ENCODE measurements at regions of chr7 and their contacts with region 1.

Region 1: DNA sequence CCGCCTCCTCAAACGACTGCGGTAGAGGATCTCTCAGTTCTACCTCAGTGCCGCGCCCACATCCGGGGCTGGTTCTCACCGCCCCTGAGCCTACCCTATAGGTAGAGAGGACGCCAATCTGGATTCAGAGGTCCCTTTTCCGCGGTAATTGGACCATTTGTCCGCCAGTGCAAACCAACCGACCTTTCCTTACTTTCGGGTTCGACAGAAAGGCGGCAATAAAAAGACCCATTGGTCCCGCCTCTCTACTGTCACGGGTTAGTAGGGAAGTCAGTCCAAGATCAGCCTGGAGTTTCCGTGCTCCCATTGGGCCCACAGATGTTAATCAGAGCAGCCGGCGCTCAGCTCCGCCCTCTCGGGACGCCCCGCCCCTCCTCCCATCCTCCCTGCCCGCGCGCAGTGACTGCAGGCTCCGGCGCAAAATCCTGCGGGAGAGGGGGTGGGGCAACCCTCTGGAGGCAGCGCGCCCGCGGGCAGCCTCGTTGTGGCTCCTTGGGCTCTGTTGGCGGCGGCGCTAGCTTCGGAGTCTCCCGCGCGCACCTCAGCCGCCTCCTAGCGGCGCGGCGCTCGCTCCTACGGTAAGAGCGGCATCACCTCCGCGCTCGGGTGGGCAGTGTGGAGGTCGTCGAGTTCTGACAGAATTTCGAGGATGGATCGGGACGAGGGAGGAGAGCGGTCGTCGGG is at the starts of genes PHTF2 and TMEM60:
- DNase-seq: peak; percentile 96
- H3K4me3 Mint-ChIP-seq: peak within 1 kb of the TSS; percentile 87
- H3K27ac Mint-ChIP-seq: peak within 1 kb of the TSS; percentile 88
- H3K4me1 Mint-ChIP-seq: peaks cover 66% of the 10 kb centered on the region
- H3K27me3 Mint-ChIP-seq: no peaks in the 10 kb centered on the region
- total RNA-seq, gene PHTF2: 24.5 to 25.3 TPM
- total RNA-seq, gene TMEM60: 11.1 to 11.4 TPM

Region 2: GRCh38 chr7:77331938-77332695 is 466.4 kb before region 1 on chr7:
- CTCF ChIA-PET with region 1: no interaction called
- intact Hi-C with region 1: loop called (anchors 2 kb)
- DNase-seq: peak; percentile 74
- H3K4me3 Mint-ChIP-seq: no peak overlapping the region
- H3K27ac Mint-ChIP-seq: no peak overlapping the region
- H3K4me1 Mint-ChIP-seq: peaks cover 44% of the 10 kb centered on the region
- H3K27me3 Mint-ChIP-seq: no peaks in the 10 kb centered on the region

Region 3: GRCh38 chr7:77415823-77416622 is 382.5 kb before region 1 on chr7 and contains the start of gene GSAP:
- CTCF ChIA-PET with region 1: no interaction called
- intact Hi-C with region 1: loop called (anchors 5 kb)
- DNase-seq: peak; percentile 44
- H3K4me3 Mint-ChIP-seq: peak within 1 kb of the TSS; percentile 68
- H3K27ac Mint-ChIP-seq: no peak within 1 kb of the TSS
- H3K4me1 Mint-ChIP-seq: peaks cover 32% of the 10 kb centered on the region
- H3K27me3 Mint-ChIP-seq: no peaks in the 10 kb centered on the region
- total RNA-seq, gene GSAP: 1.1 to 1.5 TPM

Region 4: DNA sequence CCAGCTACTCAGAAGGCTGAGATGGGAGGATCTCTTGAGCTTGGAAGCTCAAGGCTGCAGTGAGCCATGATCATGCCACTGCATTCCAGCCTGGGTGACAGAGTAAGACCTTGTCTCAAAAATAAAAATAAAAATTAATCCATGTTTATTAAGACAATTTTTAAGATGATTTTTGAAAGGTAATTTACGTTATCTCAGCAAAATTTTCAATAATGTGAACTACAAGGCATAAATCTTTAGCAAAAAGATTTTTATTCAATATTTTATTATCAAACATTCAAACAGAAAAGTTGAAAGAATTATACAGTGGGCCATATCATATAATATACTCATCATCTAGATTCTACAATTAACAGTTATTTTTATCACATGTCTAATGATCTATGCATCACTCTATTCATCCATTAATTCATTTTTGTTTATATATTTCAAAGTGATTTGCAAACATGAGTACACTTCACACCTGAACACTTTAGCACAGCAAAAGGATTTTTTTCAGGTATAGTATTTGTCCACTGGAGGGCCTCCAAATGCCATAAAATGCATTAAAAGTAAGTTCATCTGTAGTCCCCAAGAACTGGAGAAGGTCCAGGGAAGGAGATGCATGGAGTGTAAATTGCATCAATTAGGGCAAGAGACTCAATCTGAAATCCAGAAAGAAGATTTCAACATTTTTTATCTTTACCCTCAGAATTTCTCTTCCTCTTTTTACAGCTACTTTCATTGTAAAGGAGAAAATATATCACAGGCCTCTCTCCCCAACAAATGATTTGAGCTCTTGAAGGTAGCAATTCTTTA is 140.9 kb before region 1 on chr7:
- CTCF ChIA-PET with region 1: no interaction called
- intact Hi-C with region 1: loop called (anchors 1 kb)
- DNase-seq: peak; percentile 18
- H3K4me3 Mint-ChIP-seq: no peak overlapping the region
- H3K27ac Mint-ChIP-seq: no peak overlapping the region
- H3K4me1 Mint-ChIP-seq: no peaks in the 10 kb centered on the region
- H3K27me3 Mint-ChIP-seq: no peaks in the 10 kb centered on the region

Region 5: DNA sequence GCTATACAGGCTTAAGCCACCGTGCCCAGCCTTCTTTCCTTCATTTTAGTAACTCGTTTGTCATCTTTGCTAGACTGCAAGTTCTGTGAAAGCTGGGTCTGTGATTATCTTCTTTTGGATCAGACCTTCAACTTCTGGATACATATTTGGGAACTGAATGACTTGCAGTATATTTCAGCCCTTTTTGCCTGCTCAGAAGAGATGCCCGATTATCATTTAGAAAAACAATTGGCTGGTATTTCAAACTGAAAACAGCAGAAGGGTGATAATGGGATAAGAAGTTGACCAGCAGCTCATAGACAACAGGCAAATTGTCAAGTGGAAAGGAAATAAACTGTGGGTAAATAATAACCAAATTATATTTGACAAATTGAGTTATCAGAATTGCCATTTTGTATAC is 87.7 kb before region 1 on chr7:
- CTCF ChIA-PET with region 1: no interaction called
- intact Hi-C with region 1: no loop called
- DNase-seq: no peak
- H3K4me3 Mint-ChIP-seq: no peak overlapping the region
- H3K27ac Mint-ChIP-seq: no peak overlapping the region
- H3K4me1 Mint-ChIP-seq: peaks cover 50% of the 10 kb centered on the region
- H3K27me3 Mint-ChIP-seq: no peaks in the 10 kb centered on the region

Region 6: GRCh38 chr7:77759294-77759889 is 39.1 kb before region 1 on chr7:
- CTCF ChIA-PET with region 1: no interaction called
- intact Hi-C with region 1: loop called (anchors 1 kb)
- DNase-seq: peak; percentile 84
- H3K4me3 Mint-ChIP-seq: no peak overlapping the region
- H3K27ac Mint-ChIP-seq: no peak overlapping the region
- H3K4me1 Mint-ChIP-seq: peaks cover 32% of the 10 kb centered on the region
- H3K27me3 Mint-ChIP-seq: no peaks in the 10 kb centered on the region

Region 7: GRCh38 chr7:77771901-77772300 is 26.6 kb before region 1 on chr7:
- CTCF ChIA-PET with region 1: no interaction called
- intact Hi-C with region 1: no loop called
- DNase-seq: no peak
- H3K4me3 Mint-ChIP-seq: no peak overlapping the region
- H3K27ac Mint-ChIP-seq: no peak overlapping the region
- H3K4me1 Mint-ChIP-seq: no peaks in the 10 kb centered on the region
- H3K27me3 Mint-ChIP-seq: no peaks in the 10 kb centered on the region

Region 8: DNA sequence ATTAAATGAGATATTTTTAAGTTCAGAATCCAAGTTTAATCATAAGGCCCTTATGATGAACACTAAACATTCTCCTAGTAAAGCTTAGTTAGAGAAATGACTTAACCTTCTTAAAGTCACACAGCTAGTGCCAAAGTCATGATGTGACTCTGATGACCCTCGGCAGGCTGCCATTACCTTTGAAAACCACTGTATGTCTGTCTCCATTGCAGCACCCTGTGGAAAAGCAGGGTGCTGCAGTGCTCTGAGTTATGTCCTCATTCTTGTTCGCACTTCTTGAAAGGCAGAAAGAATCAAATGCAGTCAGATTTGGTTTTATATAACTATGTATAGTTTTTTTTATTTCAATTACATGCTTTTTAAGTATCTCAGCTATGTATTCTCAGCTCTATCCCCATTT is 105.1 kb after region 1 on chr7:
- CTCF ChIA-PET with region 1: no interaction called
- intact Hi-C with region 1: loop called (anchors 2 kb)
- DNase-seq: no peak
- H3K4me3 Mint-ChIP-seq: no peak overlapping the region
- H3K27ac Mint-ChIP-seq: no peak overlapping the region
- H3K4me1 Mint-ChIP-seq: no peaks in the 10 kb centered on the region
- H3K27me3 Mint-ChIP-seq: no peaks in the 10 kb centered on the region

Region 9: GRCh38 chr7:78020136-78020873 is 221.8 kb after region 1 on chr7:
- CTCF ChIA-PET with region 1: interaction called, 3 read pairs
- intact Hi-C with region 1: loop called (anchors 1 kb)
- DNase-seq: peak; percentile 59
- H3K4me3 Mint-ChIP-seq: peak overlapping the region; percentile 64
- H3K27ac Mint-ChIP-seq: no peak overlapping the region
- H3K4me1 Mint-ChIP-seq: peaks cover 9% of the 10 kb centered on the region
- H3K27me3 Mint-ChIP-seq: peaks cover 32% of the 10 kb centered on the region

Measured in activated naive CD4-positive, alpha-beta T cell treated with anti-CD3 and anti-CD28 coated beads for 36 hours (primary cell).